Sciatic nerve (tissue), 2 donors: ENCODE measurements at regions of chr14 and their contacts with region 1.

Region 1: GRCh38 chr14:83830316-83830715 is 1699.6 kb upstream of the FLRT2 start:
- DNase-seq: no peak
- ATAC-seq: no peak

Region 2: GRCh38 chr14:83255015-83255726 is 575.1 kb before region 1 on chr14:
- intact Hi-C with region 1: no loop called
- DNase-seq: no peak
- ATAC-seq: no peak

Region 3: DNA sequence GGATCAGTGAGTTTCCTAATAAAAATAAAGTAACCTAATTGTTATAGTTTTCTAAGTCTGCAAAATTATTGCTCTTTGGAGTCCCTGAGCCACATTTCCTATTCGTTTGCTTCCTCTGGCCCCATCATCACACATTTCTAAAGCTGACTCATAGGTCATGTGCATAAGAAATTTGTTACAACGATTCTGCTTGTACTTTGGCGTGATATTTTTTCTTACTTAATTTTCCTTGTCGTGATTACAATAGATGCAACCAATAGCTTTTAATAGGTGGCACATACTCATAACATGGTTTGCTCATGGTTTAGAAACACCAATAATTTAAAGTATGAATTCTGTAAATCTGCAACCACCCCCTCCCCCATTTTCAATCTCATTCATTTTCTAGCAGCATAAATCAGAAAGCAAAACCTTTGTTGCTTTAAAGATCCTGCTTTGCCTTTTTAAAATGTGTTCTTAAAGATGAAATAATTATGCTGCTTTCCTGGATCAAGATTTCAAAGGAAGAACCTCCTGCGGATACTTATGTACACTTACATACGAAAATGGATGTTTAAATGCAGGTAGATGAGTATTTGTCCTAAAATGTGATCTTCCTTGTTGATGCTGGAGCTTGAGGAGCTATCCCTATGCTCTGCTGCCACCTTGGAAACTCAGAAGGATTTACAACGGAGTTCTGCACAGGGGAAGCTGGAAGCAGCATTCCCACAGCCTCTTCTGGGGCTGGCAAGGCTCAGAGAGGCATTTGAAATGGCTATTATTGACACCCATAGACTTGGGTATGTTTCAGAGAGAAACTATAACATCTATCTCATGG is 1698.0 kb after region 1 on chr14:
- intact Hi-C with region 1: loop called (anchors 5 kb)
- DNase-seq: no peak
- ATAC-seq: peak; percentile 62